CD4-positive, alpha-beta memory T cell (primary cell): ENCODE measurements at regions of chr2 and their contacts with region 1.

Region 1: DNA sequence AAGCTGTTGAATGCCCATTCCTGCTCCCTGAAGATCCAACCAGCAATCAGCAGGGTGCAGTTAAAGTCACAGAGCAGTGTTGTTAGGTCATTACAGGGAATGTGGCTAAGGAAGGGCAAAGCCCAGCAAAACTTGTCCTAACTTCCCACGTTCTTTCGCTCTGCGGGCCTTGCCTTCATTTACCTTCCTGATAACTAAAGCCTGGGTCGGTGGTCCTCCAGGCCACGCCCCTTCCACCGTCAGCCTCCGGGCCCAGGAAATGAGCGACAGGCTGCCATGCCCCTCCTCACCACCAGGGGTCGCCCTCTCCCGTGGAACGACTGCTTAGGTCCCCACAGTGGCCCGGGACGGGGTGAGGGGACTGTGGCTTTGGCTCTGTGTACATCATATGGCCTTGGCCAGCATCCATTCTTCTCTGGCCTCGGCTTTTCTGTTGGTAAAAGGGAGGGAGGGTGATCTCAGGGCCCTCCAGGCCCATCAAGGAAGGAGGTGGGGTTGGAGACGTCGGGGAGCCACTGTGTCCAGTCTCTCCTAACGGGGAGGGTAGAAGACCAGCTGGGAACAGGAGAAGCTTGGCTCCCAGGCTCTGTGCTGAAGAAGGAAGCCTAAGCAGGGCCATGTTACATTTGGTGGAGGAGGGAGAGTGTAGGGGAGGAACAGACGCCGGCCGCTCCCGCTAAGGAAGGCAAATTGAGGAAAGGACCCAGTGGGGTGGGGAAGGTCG is 2.2 kb downstream of the SH2D6 start:
- DNase-seq: peak; percentile 81 to 87 (median 81)
- H3K4me3 ChIP-seq: no peak overlapping the region
- H3K4me3 Mint-ChIP-seq: peak overlapping the region; percentile 72 to 84 (median 78)
- H3K27ac ChIP-seq: peak overlapping the region; percentile 12
- H3K27ac Mint-ChIP-seq: peak overlapping the region; percentile 76 to 93 (median 90)
- H3K4me1 ChIP-seq: peaks cover 28% of the 10 kb centered on the region
- H3K4me1 Mint-ChIP-seq: peaks cover 12 to 29% (median 19%) of the 10 kb centered on the region in 4 donors
- H3K27me3 ChIP-seq: no peaks in the 10 kb centered on the region
- H3K27me3 Mint-ChIP-seq: no peaks in the 10 kb centered on the region

Region 2: GRCh38 chr2:85390941-85391669 is 29.6 kb before region 1 on chr2:
- CTCF ChIA-PET with region 1: interaction called, 48 read pairs
- POLR2A ChIA-PET with region 1: interaction called, 7 read pairs
- intact Hi-C with region 1: loop called (anchors 1 kb)
- DNase-seq: peak; percentile 53 to 67 (median 60)
- H3K4me3 ChIP-seq: no peak overlapping the region
- H3K4me3 Mint-ChIP-seq: no peak overlapping the region
- H3K27ac ChIP-seq: no peak overlapping the region
- H3K27ac Mint-ChIP-seq: peak overlapping the region in 4 of 7 donors; percentile 13 to 86 (median 50)
- H3K4me1 ChIP-seq: peaks cover 15% of the 10 kb centered on the region
- H3K4me1 Mint-ChIP-seq: peaks cover 4 to 9% (median 6%) of the 10 kb centered on the region in 4 donors
- H3K27me3 ChIP-seq: no peaks in the 10 kb centered on the region
- H3K27me3 Mint-ChIP-seq: no peaks in the 10 kb centered on the region

Region 3: DNA sequence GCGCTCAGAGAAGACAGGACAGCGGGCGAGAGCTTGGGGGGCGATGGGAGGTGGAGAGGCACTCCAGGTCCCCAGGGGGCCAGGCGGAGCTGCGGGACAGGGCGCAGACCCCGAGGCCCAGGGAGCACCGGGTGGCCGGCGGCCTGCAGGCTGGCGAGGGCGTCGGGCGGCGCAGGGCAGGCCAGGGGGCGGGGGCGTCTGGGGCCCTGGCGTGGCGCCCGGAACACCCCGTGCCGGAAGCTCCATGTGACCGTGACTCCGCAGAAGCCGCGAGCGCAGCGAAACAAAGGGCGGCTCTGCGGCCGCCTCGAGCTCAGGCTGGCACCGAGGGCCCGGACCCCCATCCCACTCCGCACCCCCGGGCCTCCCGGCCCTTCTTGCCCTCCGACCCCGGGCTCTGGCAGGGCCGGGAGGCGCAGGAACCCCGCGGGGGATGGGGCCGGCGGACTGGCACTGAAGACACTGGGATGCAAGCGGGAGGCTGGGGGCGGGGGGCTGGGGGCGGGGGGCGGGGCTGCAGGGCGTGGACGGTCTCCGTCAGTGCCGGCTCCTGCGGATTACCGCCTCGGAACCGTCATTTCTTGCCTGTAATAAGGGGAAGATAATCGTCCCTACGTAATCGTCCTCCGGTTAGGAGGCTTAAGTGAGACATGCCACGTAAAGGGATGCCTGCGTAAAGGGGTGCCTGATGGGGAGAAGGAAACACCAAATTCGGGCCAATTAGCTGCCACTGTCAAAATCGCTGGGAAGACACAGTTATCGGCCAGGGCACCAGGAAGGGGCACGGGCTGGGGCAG is 17.0 kb after region 1 on chr2:
- CTCF ChIA-PET with region 1: interaction called, 18 read pairs
- POLR2A ChIA-PET with region 1: interaction called, 39 read pairs
- intact Hi-C with region 1: loop called (anchors 1 kb)
- DNase-seq: peak; percentile 77 to 88 (median 81)
- H3K4me3 ChIP-seq: peak overlapping the region; percentile 36 to 52
- H3K4me3 Mint-ChIP-seq: peak overlapping the region; percentile 87 to 95 (median 91)
- H3K27ac ChIP-seq: peak overlapping the region; percentile 75
- H3K27ac Mint-ChIP-seq: peak overlapping the region; percentile 88 to 99 (median 98)
- H3K4me1 ChIP-seq: peaks cover 30% of the 10 kb centered on the region
- H3K4me1 Mint-ChIP-seq: peaks cover 9 to 38% (median 25%) of the 10 kb centered on the region in 4 donors
- H3K27me3 ChIP-seq: no peaks in the 10 kb centered on the region
- H3K27me3 Mint-ChIP-seq: no peaks in the 10 kb centered on the region

Region 4: GRCh38 chr2:85561317-85561979 is 140.8 kb after region 1 on chr2 and contains the start of gene GGCX:
- CTCF ChIA-PET with region 1: interaction called, 378 read pairs
- POLR2A ChIA-PET with region 1: interaction called, 18 read pairs
- intact Hi-C with region 1: loop called (anchors 2 kb)
- DNase-seq: peak; percentile 86 to 95 (median 87)
- H3K4me3 ChIP-seq: peak within 1 kb of the TSS; percentile 74 to 97
- H3K4me3 Mint-ChIP-seq: peak within 1 kb of the TSS; percentile 94 to 99 (median 98)
- H3K27ac ChIP-seq: peak within 1 kb of the TSS; percentile 89
- H3K27ac Mint-ChIP-seq: peak within 1 kb of the TSS; percentile 94 to 99 (median 97)
- H3K4me1 ChIP-seq: peaks cover 19% of the 10 kb centered on the region
- H3K4me1 Mint-ChIP-seq: peaks cover 12 to 35% (median 22%) of the 10 kb centered on the region in 4 donors
- H3K27me3 ChIP-seq: no peaks in the 10 kb centered on the region
- H3K27me3 Mint-ChIP-seq: no peaks in the 10 kb centered on the region
- total RNA-seq, gene GGCX: 28.5 to 38.1 TPM